Activated CD8-positive, alpha-beta T cell treated with anti-CD3 and anti-CD28 coated beads for 36 hours (primary cell): ENCODE measurements at regions of chr9 and their contacts with region 1.

Region 1: DNA sequence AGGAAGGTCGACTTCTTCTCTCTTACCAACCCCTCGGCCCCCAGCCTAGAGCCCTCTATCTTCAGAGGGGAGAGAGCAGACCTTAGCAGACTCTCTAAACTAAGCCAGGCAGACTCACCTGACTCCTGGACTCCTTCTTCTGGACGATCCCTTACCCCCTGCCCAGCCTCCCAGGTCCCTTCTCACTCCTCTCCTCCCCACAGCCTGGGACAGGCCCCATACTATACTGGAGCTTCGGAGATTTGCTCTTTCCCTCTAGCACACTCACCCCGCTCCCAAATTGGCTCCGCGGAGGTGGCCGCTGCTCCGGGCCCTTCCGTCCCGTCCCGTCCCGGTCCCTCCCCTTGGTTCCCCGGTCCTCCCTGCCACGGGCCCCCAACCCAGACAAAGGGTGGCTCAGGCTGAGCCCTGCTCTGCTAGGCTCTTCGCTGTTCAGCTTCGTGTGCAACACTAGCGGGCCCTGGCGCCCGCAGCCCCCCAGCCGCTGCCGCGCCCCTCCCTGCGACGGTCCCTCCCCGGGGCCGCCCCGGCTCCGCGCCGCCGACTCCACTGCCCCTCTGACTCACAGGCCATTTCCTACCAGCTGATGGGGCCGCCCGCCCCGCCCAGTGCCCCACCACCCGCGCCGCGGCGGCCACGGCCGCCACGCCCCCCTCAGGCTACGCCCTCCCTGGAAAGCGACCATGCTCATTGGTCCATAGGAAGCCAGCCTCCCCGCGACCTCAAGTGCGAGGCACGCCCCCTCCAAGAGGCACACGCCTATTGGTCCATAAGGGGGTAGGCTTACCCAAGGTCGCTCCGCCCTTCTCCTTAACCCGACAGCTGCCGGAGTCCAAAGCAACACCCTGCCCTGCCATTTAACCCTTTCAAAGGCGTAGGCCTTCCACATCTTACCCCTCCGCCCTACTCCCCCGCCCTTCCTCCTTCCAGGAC is 4.4 kb downstream of the ATOSB start:
- DNase-seq: peak; percentile 98
- ATAC-seq: peak; percentile 81
- H3K4me3 Mint-ChIP-seq: peak overlapping the region; percentile 65
- H3K27ac Mint-ChIP-seq: peak overlapping the region; percentile 70
- H3K4me1 Mint-ChIP-seq: peaks cover 43% of the 10 kb centered on the region
- H3K27me3 Mint-ChIP-seq: no peaks in the 10 kb centered on the region
- CTCF ChIP-seq: no peak

Region 2: GRCh38 chr9:35096035-35096849 is 15.0 kb before region 1 on chr9 and contains the start of gene PIGO:
- CTCF ChIA-PET with region 1: interaction called, 22 read pairs
- POLR2A ChIA-PET with region 1: interaction called, 9 read pairs
- intact Hi-C with region 1: no loop called
- DNase-seq: peak; percentile 93
- ATAC-seq: peak; percentile 92
- H3K4me3 Mint-ChIP-seq: peak within 1 kb of the TSS; percentile 85
- H3K27ac Mint-ChIP-seq: peak within 1 kb of the TSS; percentile 93
- H3K4me1 Mint-ChIP-seq: peaks cover 23% of the 10 kb centered on the region
- H3K27me3 Mint-ChIP-seq: no peaks in the 10 kb centered on the region
- CTCF ChIP-seq: peak; percentile 95
- total RNA-seq, gene PIGO: 19.8 to 21.9 TPM